ENCODE measurements at regions of chr9 and their contacts with region 1.

Region 1: DNA sequence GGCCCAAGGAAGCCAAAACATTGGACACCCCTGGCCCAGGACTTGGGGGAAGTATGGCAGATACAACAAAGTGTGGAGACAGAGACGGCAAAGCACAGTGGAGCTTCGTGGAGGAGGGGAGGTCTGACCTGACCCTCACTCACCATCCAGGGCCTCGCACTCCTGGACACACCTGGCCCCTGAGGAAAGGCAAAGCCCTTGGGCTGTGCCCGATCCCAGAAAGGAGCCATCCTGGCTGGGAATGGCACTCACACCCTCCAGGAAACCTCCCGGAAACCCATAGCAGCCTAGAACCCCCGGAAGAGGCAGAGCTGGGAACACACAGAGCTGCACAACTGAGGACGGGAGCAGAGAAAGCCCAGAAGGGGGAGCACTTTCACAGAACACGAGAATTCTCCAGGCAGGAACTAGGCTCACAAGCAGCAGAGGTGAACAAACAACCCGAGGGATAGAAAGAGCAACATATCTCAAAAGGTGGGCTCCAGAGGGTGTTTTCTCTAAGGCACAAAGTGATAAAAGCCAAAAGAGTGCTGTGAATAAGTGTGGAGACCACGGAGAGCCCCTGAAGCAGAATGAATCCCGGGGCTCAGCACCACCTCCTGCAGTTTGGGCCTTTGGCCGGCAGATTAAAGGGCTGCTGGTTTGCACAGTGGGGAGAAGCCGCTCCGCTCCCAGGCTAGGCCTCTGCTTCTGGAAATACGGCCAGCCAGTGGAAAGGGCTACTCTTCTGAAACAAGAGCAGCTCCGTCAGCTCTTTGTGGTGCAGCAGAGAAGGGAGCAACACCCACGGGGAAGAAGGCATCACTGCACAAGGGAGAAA is 108.2 kb downstream of the UBE2R2 start:
- DNase-seq: peak in 1 of 2 donors; percentile 65
- ATAC-seq: peak in 7 of 8 donors; percentile 53 to 76 (median 70)
- H3K4me3 ChIP-seq: no peak overlapping the region
- H3K27ac ChIP-seq: peak overlapping the region in 8 of 10 donors; percentile 16 to 65 (median 23)
- H3K4me1 ChIP-seq: peaks cover 5 to 47% (median 24%) of the 10 kb centered on the region in 9 donors
- H3K27me3 ChIP-seq: no peaks in the 10 kb centered on the region
- CTCF ChIP-seq: peak; percentile 29 to 79 (median 66)

Region 2: DNA sequence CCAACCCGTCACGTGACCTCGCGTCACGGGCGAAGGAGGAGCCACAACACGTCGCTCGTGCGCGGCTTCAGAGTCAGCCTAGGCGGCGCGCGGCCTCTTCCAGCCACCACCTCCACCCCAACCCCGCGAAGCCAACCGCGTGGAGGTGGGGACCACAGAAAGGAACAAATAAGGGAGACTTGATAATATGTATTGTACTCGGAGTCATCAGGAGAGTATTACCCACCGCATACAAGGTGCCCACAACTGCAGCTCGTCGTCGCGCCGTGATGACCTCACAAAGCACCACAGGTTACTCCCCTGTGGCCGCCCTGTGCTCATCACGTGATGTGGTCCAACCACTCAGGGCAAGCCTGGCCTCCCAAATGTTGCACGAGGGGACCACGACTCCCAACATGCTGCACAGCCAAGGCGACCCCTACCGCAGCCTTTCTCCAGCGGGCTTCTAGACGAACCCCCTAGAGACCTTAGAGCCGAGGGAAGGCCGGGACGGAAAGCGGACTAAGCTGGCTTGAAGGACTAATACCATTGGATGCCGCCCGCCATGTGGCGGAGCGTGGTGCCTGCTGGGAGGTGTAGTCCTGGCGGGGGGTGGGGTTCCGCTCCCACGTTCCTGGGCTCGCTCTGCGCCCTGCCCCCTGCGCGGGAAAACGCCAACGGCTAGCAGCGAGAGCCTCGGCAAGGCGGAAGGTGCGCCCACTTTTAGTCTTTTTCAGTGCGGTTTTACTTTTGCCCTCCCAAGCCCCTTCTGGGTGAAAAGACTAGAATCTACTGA is 123.9 kb after region 1 on chr9:
- intact Hi-C with region 1: loop called in 2 of 10 experiments (anchors 10 kb)
- DNase-seq: peak; percentile 96 to 98
- ATAC-seq: peak; percentile 94 to 98 (median 96)
- H3K4me3 ChIP-seq: peak overlapping the region; percentile 89 to 99 (median 92)
- H3K27ac ChIP-seq: peak overlapping the region; percentile 82 to 98 (median 94)
- H3K4me1 ChIP-seq: peaks cover 4 to 36% (median 29%) of the 10 kb centered on the region in 9 donors
- H3K27me3 ChIP-seq: no peaks in the 10 kb centered on the region
- CTCF ChIP-seq: peak in 4 of 9 donors; percentile 6 to 29 (median 15)

Region 3: GRCh38 chr9:35035851-35036701 is 1110.9 kb after region 1 on chr9:
- intact Hi-C with region 1: no loop called
- DNase-seq: peak; percentile 46 to 73
- ATAC-seq: peak; percentile 52 to 83 (median 80)
- H3K4me3 ChIP-seq: peak overlapping the region in 9 of 10 donors; percentile 18 to 48 (median 41)
- H3K27ac ChIP-seq: peak overlapping the region in 6 of 10 donors; percentile 1 to 67 (median 37)
- H3K4me1 ChIP-seq: peaks cover 0 to 10% (median 0%) of the 10 kb centered on the region in 9 donors
- H3K27me3 ChIP-seq: no peaks in the 10 kb centered on the region
- CTCF ChIP-seq: peak in 1 of 9 donors; percentile 12

Measured in heart right ventricle (tissue), 16 donors.